GM10248 (cell line): ENCODE measurements at regions of chr1 and their contacts with region 1.

Region 1: GRCh38 chr1:39538588-39539465 is 37.8 kb downstream of the PABPC4 start:
- DNase-seq: peak; percentile 82
- CTCF ChIP-seq: peak; percentile 77

Region 2: DNA sequence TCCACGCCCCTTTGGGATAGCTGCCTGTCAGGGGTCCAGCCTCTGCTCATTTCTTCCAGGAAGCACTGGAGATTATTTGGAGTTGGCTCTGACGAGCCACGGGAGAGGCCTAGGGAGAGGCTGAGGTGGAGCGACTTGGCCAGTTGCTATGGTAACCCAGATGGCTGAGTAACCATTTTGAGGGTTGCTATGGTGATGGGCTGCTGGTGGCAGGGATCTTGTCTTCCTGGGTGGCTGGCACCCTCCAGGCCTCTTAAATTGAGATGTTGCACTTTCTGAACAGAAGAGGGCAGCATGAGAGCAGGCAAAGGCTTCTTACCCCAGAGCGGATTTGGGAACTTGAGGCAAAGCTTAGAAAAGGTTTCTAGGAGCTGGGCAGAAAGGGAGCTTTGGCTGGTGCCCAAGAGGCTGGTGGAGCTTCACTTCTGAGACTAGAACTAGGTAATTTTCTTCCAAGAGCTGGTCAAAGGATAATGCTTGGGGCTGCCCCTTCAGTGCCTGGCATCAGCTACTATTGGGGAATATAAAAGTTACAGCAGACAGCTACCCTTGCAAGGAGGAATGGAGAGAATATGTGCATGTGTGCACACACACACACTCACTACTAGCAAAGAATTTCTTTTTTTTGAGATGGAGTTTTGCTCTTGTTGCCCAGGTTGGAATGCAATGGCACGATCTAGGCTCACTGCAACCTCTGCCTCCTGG is 440.1 kb before region 1 on chr1:
- CTCF ChIA-PET with region 1: interaction called, 32 read pairs
- POLR2A ChIA-PET with region 1: no interaction called
- DNase-seq: peak; percentile 81
- CTCF ChIP-seq: peak; percentile 84

Region 3: GRCh38 chr1:39408641-39409054 is 130.2 kb before region 1 on chr1:
- CTCF ChIA-PET with region 1: interaction called, 10 read pairs
- POLR2A ChIA-PET with region 1: no interaction called
- DNase-seq: peak; percentile 95
- CTCF ChIP-seq: no peak

Region 4: GRCh38 chr1:39490596-39491145 is 48.2 kb before region 1 on chr1:
- CTCF ChIA-PET with region 1: interaction called, 19 read pairs
- POLR2A ChIA-PET with region 1: no interaction called
- DNase-seq: no peak
- CTCF ChIP-seq: no peak

Region 5: GRCh38 chr1:39561279-39561678 is 22.5 kb after region 1 on chr1:
- CTCF ChIA-PET with region 1: interaction called, 15 read pairs
- POLR2A ChIA-PET with region 1: no interaction called
- DNase-seq: no peak
- CTCF ChIP-seq: no peak